ENCODE measurements at regions of chrX and their contacts with region 1.

Region 1: DNA sequence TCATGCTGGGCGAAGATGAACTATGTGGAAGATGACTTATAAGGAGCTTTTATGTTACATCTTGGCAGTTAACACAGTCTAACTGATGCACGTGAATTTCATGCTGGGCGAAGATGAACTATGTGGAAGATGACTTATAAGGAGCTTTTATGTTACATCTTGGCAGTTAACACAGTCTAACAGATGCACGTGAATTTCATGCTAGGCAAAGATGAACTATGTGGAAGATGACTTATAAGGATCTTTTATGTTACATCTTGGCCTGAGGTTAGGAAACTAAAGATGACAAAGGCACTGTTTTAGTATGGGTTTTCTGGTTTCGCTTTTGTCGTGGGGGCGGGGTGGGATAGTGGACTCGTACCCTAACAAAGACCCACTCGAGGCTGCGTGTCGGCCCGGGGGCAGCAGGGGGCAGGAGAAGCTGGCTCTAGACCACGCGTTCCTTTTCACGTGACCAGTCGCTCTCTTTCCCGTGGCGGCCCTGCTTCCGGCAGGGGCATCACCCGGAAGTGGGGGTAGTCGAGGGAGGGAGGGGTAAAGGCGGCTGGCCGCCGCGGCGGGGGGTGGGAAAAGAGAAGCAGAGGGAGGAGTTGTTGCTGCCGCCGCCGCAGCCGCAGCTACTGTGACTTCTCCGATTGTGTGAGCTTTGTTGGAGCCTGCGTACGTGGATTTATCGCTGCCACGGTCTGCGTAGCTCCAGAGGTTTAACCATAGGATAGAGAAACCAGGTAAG is at the start of gene ATP7A:
- DNase-seq: peak; percentile 94
- ATAC-seq: peak; percentile 95
- H3K4me3 ChIP-seq: peak within 1 kb of the TSS; percentile 52 to 69
- H3K27ac ChIP-seq: peak within 1 kb of the TSS in 1 of 2 donors; percentile 55
- H3K4me1 ChIP-seq: no peaks in the 10 kb centered on the region
- H3K27me3 ChIP-seq: no peaks in the 10 kb centered on the region
- total RNA-seq, gene ATP7A: 14.9 to 18.7 TPM

Region 2: DNA sequence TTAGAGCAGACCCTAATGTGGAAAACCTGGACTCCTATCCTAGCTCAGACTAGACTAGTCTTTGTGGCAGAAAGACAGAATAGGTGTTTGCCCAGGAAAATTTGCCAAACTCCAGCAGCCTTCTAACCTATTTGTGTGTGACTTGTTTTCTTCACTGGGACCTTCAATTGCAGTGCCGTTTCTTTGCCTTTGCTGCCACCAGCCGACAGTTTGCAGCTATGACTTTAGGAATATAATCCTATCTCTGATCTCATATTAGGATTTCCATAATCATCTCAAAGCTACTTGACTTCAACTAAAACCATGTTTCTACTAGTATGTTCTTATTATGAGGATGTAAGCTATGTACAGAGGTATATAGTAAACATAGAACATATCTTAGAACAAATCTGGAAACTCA is 119.4 kb after region 1 on chrX:
- intact Hi-C with region 1: loop called in 1 of 2 experiments (anchors 5 kb)
- DNase-seq: no peak
- ATAC-seq: no peak
- H3K4me3 ChIP-seq: no peak overlapping the region
- H3K27ac ChIP-seq: no peak overlapping the region
- H3K4me1 ChIP-seq: no peaks in the 10 kb centered on the region
- H3K27me3 ChIP-seq: no peaks in the 10 kb centered on the region

Region 3: DNA sequence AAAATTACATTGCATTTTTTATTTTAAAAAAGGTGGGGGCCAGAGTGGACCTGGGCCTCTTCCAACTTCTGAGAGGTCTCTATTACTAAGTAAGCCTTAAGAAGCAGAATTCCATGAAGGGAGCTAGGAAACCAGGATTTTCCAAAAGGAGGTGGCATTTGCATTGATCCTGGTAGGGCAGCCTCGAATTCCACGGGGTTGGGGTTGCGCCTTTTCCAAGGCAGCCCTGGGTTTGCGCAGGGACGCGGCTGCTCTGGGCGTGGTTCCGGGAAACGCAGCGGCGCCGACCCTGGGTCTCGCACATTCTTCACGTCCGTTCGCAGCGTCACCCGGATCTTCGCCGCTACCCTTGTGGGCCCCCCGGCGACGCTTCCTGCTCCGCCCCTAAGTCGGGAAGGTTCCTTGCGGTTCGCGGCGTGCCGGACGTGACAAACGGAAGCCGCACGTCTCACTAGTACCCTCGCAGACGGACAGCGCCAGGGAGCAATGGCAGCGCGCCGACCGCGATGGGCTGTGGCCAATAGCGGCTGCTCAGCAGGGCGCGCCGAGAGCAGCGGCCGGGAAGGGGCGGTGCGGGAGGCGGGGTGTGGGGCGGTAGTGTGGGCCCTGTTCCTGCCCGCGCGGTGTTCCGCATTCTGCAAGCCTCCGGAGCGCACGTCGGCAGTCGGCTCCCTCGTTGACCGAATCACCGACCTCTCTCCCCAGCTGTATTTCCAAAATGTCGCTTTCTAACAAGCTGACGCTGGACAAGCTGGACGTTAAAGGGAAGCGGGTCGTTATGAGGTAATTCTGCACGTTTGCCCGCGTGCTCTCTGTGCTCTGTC is 193.6 kb after region 1 on chrX and contains the start of gene PGK1:
- intact Hi-C with region 1: loop called in 1 of 2 experiments (anchors 10 kb)
- DNase-seq: peak; percentile 97 to 98
- ATAC-seq: peak; percentile 98
- H3K4me3 ChIP-seq: peak within 1 kb of the TSS; percentile 48 to 93
- H3K27ac ChIP-seq: peak within 1 kb of the TSS; percentile 77 to 98
- H3K4me1 ChIP-seq: peaks cover 0 to 1% of the 10 kb centered on the region in 2 donors
- H3K27me3 ChIP-seq: no peaks in the 10 kb centered on the region
- total RNA-seq, gene PGK1: 235 to 254 TPM

Measured in aorta (tissue), 5 donors.